ENCODE measurements at regions of chr6 and their contacts with region 1.

Region 1: GRCh38 chr6:45714741-45715507 is 300.7 kb downstream of the CLIC5 start:
- DNase-seq: peak; percentile 51
- H3K4me3 ChIP-seq: peak overlapping the region in 1 of 2 experiments; percentile 8; a peak in 1 of 4 replicates
- H3K27ac ChIP-seq: no peak overlapping the region
- H3K4me1 ChIP-seq: peaks cover 0 to 13% of the 10 kb centered on the region in 2 experiments; a peak in 1 of 4 replicates
- H3K27me3 ChIP-seq: no peaks in the 10 kb centered on the region
- CTCF ChIP-seq: peak; percentile 90
- EP300 ChIP-seq: no peak
- RAD21 ChIP-seq: peak; percentile 94

Region 2: GRCh38 chr6:44593539-44593944 is 1121.4 kb before region 1 on chr6:
- CTCF ChIA-PET with region 1: interaction called, 19 read pairs
- POLR2A ChIA-PET with region 1: no interaction called
- DNase-seq: peak; percentile 63
- H3K4me3 ChIP-seq: peak overlapping the region in 1 of 2 experiments; percentile 10; a peak in 1 of 4 replicates
- H3K27ac ChIP-seq: no peak overlapping the region
- H3K4me1 ChIP-seq: no peaks in the 10 kb centered on the region
- H3K27me3 ChIP-seq: peaks cover 14% of the 10 kb centered on the region; the same call in 1 of the 2 replicates
- CTCF ChIP-seq: peak; percentile 73
- EP300 ChIP-seq: no peak
- RAD21 ChIP-seq: peak; percentile 67

Region 3: GRCh38 chr6:44630125-44631028 is 1084.5 kb before region 1 on chr6:
- CTCF ChIA-PET with region 1: interaction called, 31 read pairs
- POLR2A ChIA-PET with region 1: interaction called, 3 read pairs
- DNase-seq: peak; percentile 76
- H3K4me3 ChIP-seq: no peak overlapping the region
- H3K27ac ChIP-seq: no peak overlapping the region
- H3K4me1 ChIP-seq: no peaks in the 10 kb centered on the region
- H3K27me3 ChIP-seq: no peaks in the 10 kb centered on the region
- CTCF ChIP-seq: peak; percentile 78
- EP300 ChIP-seq: no peak
- RAD21 ChIP-seq: peak; percentile 77

Region 4: DNA sequence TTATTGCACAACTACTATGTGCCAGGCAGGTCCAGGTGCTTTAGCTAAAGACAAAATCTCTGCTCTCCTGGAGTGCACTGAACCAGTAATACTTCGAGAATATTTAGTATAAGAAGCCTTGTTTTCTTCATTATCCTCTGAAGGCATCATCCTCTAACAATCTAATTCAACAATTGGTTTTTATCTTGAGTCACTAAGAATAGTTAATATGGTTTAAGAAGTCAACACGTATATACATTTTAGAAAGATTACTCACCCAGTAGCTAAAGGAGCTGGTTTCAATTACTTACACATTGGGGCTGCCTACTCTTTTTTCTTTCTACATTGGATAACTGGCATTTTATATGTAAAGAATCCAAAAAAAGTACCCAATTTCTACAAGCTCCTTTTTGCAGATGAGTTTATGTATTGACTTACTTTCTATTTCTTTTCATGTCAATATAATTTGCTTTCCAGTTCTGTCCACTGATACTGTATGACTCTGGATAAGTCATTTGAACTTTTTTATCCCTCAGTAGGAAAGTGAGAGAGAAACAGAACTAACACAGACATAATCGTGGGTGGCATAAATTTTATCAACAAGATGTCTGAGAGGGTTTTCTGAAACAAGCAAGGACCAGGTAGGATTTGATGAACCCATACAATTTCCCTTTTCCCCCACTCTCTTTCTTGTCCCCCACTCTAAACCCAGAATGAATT is 11.7 kb before region 1 on chr6:
- CTCF ChIA-PET with region 1: interaction called, 18 read pairs
- POLR2A ChIA-PET with region 1: no interaction called
- DNase-seq: no peak
- H3K4me3 ChIP-seq: no peak overlapping the region
- H3K27ac ChIP-seq: peak overlapping the region in 1 of 2 experiments; percentile 51; a peak in 2 of 4 replicates
- H3K4me1 ChIP-seq: no peaks in the 10 kb centered on the region
- H3K27me3 ChIP-seq: no peaks in the 10 kb centered on the region
- CTCF ChIP-seq: no peak
- EP300 ChIP-seq: peak in 1 of 2 experiments; percentile 37; a peak in 1 of 4 replicates
- RAD21 ChIP-seq: no peak

Measured in SK-N-SH (cell line).